A673 (cell line): ENCODE measurements at regions of chr3 and their contacts with region 1.

Region 1: GRCh38 chr3:106083207-106083606 is 214.4 kb upstream of the CBLB start:
- DNase-seq: no peak
- H3K4me3 ChIP-seq: no peak overlapping the region
- H3K27ac ChIP-seq: peak overlapping the region; percentile 17
- H3K4me1 ChIP-seq: peaks cover 4% of the 10 kb centered on the region
- H3K27me3 ChIP-seq: no peaks in the 10 kb centered on the region
- CTCF ChIP-seq: no peak

Region 2: DNA sequence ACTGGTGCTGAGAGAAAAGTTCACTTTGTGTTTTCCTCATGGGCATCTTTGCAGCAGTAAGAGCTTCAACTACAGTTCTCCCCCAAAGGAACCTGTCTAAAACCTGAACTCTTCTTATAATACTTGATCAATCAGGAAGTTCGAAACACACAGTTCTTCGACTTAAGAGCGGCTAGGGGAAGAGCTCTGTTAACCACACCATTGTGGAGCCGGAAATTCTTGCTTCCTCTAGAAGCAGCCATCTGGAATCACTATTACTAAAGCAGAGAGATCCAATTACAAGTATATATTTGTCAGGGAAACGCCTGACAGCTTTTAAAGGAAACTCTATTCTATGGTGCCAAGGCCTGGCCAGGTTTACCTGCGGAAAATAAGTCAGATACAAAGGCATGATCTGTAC is 122.9 kb after region 1 on chr3:
- CTCF ChIA-PET with region 1: interaction called, 28 read pairs
- POLR2A ChIA-PET with region 1: no interaction called
- intact Hi-C with region 1: no loop called
- DNase-seq: peak; percentile 94
- H3K4me3 ChIP-seq: peak overlapping the region; percentile 25
- H3K27ac ChIP-seq: peak overlapping the region; percentile 93
- H3K4me1 ChIP-seq: peaks cover 37% of the 10 kb centered on the region
- H3K27me3 ChIP-seq: no peaks in the 10 kb centered on the region
- CTCF ChIP-seq: no peak

Region 3: GRCh38 chr3:106609666-106610301 is 526.6 kb after region 1 on chr3:
- CTCF ChIA-PET with region 1: no interaction called
- POLR2A ChIA-PET with region 1: no interaction called
- intact Hi-C with region 1: loop called (anchors 10 kb)
- DNase-seq: peak; percentile 94
- H3K4me3 ChIP-seq: no peak overlapping the region
- H3K27ac ChIP-seq: peak overlapping the region; percentile 53
- H3K4me1 ChIP-seq: peaks cover 29% of the 10 kb centered on the region
- H3K27me3 ChIP-seq: no peaks in the 10 kb centered on the region
- CTCF ChIP-seq: peak; percentile 95

Region 4: DNA sequence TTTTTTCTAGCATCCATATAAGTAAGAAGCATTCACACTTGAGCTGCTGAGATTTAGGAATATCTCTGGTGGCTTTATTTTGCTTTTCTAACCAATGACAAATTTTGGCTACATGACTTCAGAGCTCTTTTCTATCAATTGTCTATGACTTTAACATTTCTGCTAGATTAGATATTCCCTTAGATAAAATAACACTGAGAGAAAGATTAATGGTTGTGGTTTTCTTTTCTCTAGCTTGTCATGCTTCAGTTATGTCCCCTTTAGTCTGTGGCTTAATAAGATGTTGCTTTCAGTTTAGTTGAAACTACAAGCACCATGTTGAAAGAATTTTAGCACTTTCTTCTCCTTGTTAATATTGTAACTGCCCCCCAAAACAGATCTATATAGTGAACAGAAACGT is 628.4 kb after region 1 on chr3:
- CTCF ChIA-PET with region 1: no interaction called
- POLR2A ChIA-PET with region 1: no interaction called
- intact Hi-C with region 1: loop called (anchors 10 kb)
- DNase-seq: peak; percentile 32
- H3K4me3 ChIP-seq: no peak overlapping the region
- H3K27ac ChIP-seq: peak overlapping the region; percentile 75
- H3K4me1 ChIP-seq: peaks cover 35% of the 10 kb centered on the region
- H3K27me3 ChIP-seq: no peaks in the 10 kb centered on the region
- CTCF ChIP-seq: no peak

Region 5: DNA sequence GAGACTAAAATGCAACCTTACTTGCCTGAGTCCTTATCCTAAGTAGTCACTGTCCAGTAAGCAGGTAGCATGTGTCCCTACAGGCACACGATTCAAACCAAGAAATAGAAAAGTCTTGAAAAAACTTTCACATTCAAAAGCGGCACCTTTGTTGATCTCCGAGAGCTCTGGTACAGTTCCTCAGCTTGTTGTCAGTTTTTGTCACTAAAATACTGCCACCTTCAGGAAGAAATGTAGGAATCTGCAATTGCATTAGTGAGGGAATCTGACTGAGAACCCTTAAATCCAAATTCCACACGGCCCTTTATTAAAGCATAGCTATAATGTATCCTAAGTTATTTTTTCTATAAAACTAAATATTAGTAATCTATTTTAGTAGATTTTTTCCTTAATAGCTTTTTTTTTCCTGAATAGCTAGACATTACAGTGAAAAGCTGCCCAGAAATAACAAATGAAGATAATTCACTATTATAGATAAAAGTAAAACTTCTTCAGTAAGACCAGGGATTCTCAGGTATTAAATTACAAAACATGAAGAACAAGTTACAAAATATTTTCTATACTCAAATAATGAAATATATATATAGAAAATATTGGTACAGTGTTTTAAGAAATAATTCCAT is 1338.1 kb after region 1 on chr3:
- CTCF ChIA-PET with region 1: interaction called, 14 read pairs
- POLR2A ChIA-PET with region 1: no interaction called
- intact Hi-C with region 1: no loop called
- DNase-seq: peak; percentile 77
- H3K4me3 ChIP-seq: peak overlapping the region; percentile 18
- H3K27ac ChIP-seq: no peak overlapping the region
- H3K4me1 ChIP-seq: no peaks in the 10 kb centered on the region
- H3K27me3 ChIP-seq: no peaks in the 10 kb centered on the region
- CTCF ChIP-seq: peak; percentile 77